Heart left ventricle (tissue), 16 donors: ENCODE measurements at regions of chr10 and their contacts with region 1.

Region 1: GRCh38 chr10:96642973-96643372 is 56.2 kb upstream of the TM9SF3 start:
- DNase-seq: peak; percentile 51 to 84 (median 62)
- ATAC-seq: peak in 3 of 4 donors; percentile 54 to 68 (median 59)
- H3K4me3 ChIP-seq: no peak overlapping the region
- H3K27ac ChIP-seq: no peak overlapping the region
- H3K4me1 ChIP-seq: peaks cover 0 to 35% (median 0%) of the 10 kb centered on the region in 12 donors
- H3K27me3 ChIP-seq: no peaks in the 10 kb centered on the region
- CTCF ChIP-seq: peak in 11 of 12 donors; percentile 5 to 62 (median 40)
- POLR2A ChIP-seq: no peak

Region 2: GRCh38 chr10:96287392-96288105 is 355.4 kb before region 1 on chr10:
- intact Hi-C with region 1: no loop called
- DNase-seq: no peak
- ATAC-seq: no peak
- H3K4me3 ChIP-seq: no peak overlapping the region
- H3K27ac ChIP-seq: peak overlapping the region in 1 of 12 donors; percentile 12
- H3K4me1 ChIP-seq: peaks cover 0 to 12% (median 0%) of the 10 kb centered on the region in 12 donors
- H3K27me3 ChIP-seq: peaks cover 0 to 46% (median 0%) of the 10 kb centered on the region in 9 donors
- CTCF ChIP-seq: no peak
- POLR2A ChIP-seq: no peak

Region 3: DNA sequence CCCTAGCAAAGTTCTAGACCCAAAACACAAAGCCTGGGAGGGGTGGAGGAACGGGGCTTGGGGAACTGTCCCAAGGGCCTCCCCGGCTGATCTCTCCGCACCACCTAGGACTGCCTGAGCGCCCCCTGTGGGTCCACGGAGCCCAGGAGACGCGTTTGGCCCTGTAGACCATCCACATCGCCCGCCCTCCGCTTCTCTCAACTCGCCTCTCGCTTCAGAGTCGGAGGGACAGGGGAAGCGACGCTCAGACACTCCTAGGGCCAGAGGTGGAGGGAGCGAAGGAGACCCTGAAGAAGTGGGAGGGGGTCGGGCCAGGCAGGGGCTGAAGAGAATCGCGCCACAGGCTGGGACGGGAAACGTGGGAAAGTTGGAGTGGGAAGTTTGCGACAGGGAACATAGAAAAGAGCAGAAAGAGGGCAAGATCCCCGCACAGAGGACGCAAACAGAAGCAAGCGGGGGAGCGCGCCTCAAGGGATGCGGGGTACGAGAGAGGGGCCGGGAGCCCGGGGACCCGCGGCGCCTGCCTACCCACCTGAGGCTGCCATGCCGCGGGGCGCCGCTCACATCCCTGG is 77.0 kb after region 1 on chr10:
- intact Hi-C with region 1: loop called in 1 of 10 experiments (anchors 10 kb)
- DNase-seq: peak; percentile 56 to 89 (median 70)
- ATAC-seq: peak; percentile 34 to 77 (median 76)
- H3K4me3 ChIP-seq: peak overlapping the region; percentile 37 to 75 (median 58)
- H3K27ac ChIP-seq: peak overlapping the region in 8 of 12 donors; percentile 1 to 89 (median 38)
- H3K4me1 ChIP-seq: peaks cover 0 to 40% (median 5%) of the 10 kb centered on the region in 12 donors
- H3K27me3 ChIP-seq: peaks cover 0 to 9% (median 0%) of the 10 kb centered on the region in 9 donors
- CTCF ChIP-seq: peak in 9 of 12 donors; percentile 10 to 50 (median 35)
- POLR2A ChIP-seq: no peak

Region 4: DNA sequence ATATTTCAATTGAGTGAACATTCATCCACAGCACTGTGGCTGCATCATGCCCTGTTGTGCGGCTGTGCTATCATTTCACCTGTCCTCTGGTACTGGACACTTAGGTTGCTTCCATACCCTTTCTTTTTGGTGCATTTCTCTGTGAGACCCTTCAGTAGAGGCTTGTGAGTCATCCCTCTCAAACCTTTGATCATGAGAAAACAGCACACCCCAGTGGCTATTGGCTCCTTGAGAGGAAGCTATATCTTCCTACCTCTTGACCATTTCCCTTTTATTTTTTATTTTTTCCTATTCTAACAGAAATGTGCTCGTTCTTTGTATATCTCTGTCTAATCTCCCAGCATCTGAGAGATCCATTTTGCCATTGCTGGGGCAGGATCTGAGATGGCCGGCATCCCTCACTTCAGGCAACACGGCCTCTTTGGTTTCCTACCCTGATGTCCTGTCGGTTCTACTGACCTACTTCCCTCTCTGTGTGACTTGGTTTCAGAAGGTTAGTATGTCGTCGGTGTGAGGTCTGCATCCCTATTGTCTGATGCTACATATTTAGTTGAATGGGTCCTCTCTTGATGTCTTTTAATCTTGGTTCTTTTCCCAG is 101.1 kb after region 1 on chr10:
- intact Hi-C with region 1: loop called in 1 of 10 experiments (anchors 5 kb)
- DNase-seq: no peak
- ATAC-seq: peak in 2 of 4 donors; percentile 42 to 56
- H3K4me3 ChIP-seq: no peak overlapping the region
- H3K27ac ChIP-seq: no peak overlapping the region
- H3K4me1 ChIP-seq: peaks cover 0 to 43% (median 0%) of the 10 kb centered on the region in 12 donors
- H3K27me3 ChIP-seq: no peaks in the 10 kb centered on the region
- CTCF ChIP-seq: peak in 11 of 12 donors; percentile 7 to 43 (median 24)
- POLR2A ChIP-seq: no peak

Region 5: GRCh38 chr10:96826438-96826837 is 183.5 kb after region 1 on chr10:
- intact Hi-C with region 1: loop called in 2 of 10 experiments (anchors 5 to 10 kb)
- DNase-seq: no peak
- ATAC-seq: peak in 1 of 4 donors; percentile 11
- H3K4me3 ChIP-seq: no peak overlapping the region
- H3K27ac ChIP-seq: no peak overlapping the region
- H3K4me1 ChIP-seq: peaks cover 0 to 14% (median 6%) of the 10 kb centered on the region in 12 donors
- H3K27me3 ChIP-seq: no peaks in the 10 kb centered on the region
- CTCF ChIP-seq: no peak
- POLR2A ChIP-seq: no peak